ENCODE measurements at regions of chr1 and their contacts with region 1.

Region 1: GRCh38 chr1:248686815-248687214 is 15.8 kb downstream of the OR14I1 start:
- DNase-seq: no peak
- H3K4me3 Mint-ChIP-seq: no peak overlapping the region
- H3K27ac Mint-ChIP-seq: no peak overlapping the region
- H3K4me1 Mint-ChIP-seq: peaks cover 4% of the 10 kb centered on the region
- H3K27me3 Mint-ChIP-seq: peaks cover 3% of the 10 kb centered on the region

Region 2: DNA sequence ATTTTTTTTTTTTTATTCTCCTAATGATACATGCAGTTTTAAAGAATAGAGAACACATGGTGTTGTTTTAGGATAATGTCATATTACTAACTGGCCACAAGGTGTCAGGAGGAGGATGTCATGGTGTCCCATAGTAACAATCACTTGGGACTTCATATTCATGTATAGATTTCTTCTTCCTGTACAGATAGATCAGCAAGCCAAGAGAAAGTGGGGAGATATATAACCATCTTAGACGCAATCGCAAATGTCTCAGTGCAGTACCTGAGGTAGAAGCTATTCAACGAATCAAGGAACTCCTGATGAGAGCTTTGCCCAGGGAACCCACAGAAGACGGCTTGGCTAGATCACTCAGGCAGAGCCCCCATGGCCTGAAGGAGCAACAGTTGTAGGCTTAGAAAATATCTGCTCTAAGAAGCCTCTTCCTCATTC is 64.2 kb before region 1 on chr1:
- intact Hi-C with region 1: loop called (anchors 5 kb)
- DNase-seq: no peak
- H3K4me3 Mint-ChIP-seq: no peak overlapping the region
- H3K27ac Mint-ChIP-seq: no peak overlapping the region
- H3K4me1 Mint-ChIP-seq: peaks cover 9% of the 10 kb centered on the region
- H3K27me3 Mint-ChIP-seq: no peaks in the 10 kb centered on the region